ENCODE measurements at regions of chr1 and their contacts with region 1.

Region 1: GRCh38 chr1:156838981-156839410 is 19.9 kb downstream of the INSRR start:
- DNase-seq: peak in 1 of 2 experiments; percentile 86
- H3K4me3 ChIP-seq: no peak overlapping the region
- H3K27ac ChIP-seq: no peak overlapping the region
- H3K4me1 ChIP-seq: peaks cover 0 to 2% (median 2%) of the 10 kb centered on the region in 4 experiments; a peak in 3 of 7 replicates
- H3K27me3 ChIP-seq: peaks cover 9 to 23% (median 22%) of the 10 kb centered on the region in 4 experiments
- CTCF ChIP-seq: peak; percentile 92 to 94 (median 93)
- EP300 ChIP-seq: no peak
- POLR2A ChIP-seq: no peak
- RAD21 ChIP-seq: peak; percentile 90 to 94

Region 2: GRCh38 chr1:156767101-156767878 is 71.7 kb before region 1 on chr1 and contains the start of gene PRCC:
- CTCF ChIA-PET with region 1: interaction called, 10 read pairs
- POLR2A ChIA-PET with region 1: interaction called, 3 read pairs
- DNase-seq: peak; percentile 94 to 98
- H3K4me3 ChIP-seq: peak within 1 kb of the TSS; percentile 67 to 97 (median 86)
- H3K27ac ChIP-seq: peak within 1 kb of the TSS; percentile 86
- H3K4me1 ChIP-seq: peaks cover 0 to 16% (median 6%) of the 10 kb centered on the region in 4 experiments; a peak in 5 of 7 replicates
- H3K27me3 ChIP-seq: no peaks in the 10 kb centered on the region
- CTCF ChIP-seq: 0 out of 4 replicates have a peak, but pooled peaks of 1 of the 3 experiments have one; percentile 1
- EP300 ChIP-seq: no peak
- POLR2A ChIP-seq: peak in 1 of 2 experiments; percentile 74; a peak in 2 of 3 replicates
- RAD21 ChIP-seq: no peak
- total RNA-seq, gene PRCC: 102 and 115 TPM in 2 replicates

Region 3: GRCh38 chr1:156797212-156797871 is 41.7 kb before region 1 on chr1:
- CTCF ChIA-PET with region 1: interaction called, 491 read pairs
- POLR2A ChIA-PET with region 1: no interaction called
- DNase-seq: no peak
- H3K4me3 ChIP-seq: no peak overlapping the region
- H3K27ac ChIP-seq: no peak overlapping the region
- H3K4me1 ChIP-seq: no peaks in the 10 kb centered on the region
- H3K27me3 ChIP-seq: no peaks in the 10 kb centered on the region
- CTCF ChIP-seq: peak in 2 of 3 experiments; percentile 84 to 85; a peak in 3 of 4 replicates
- EP300 ChIP-seq: no peak
- POLR2A ChIP-seq: no peak
- RAD21 ChIP-seq: peak; percentile 81 to 83

Region 4: DNA sequence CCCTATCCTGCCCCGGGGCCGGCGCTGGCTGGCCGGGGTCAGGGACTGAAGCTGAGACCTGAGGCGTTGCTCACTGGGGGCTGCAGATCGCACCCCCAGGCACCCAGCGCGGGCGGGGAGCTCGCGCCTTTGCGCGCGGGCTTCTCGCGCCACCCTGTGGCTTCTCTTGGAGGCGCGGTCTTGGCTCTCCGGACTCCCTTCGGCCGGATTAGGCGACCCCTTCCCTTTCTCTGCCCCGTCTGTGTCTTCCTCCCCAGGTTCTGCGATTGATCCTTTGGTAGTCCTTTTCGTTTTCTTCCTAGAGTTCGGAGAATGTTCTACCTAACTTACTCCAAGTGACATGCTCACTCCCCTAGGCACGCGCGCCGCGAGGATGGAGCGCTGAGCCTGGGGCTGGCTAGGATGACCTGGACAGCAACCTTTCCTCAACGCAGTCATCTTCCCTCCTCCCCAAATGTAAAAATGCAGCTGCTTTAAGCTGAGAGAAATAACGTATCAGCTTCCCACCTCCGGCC is 21.2 kb after region 1 on chr1:
- CTCF ChIA-PET with region 1: interaction called, 556 read pairs
- POLR2A ChIA-PET with region 1: interaction called, 5 read pairs
- DNase-seq: peak in 1 of 2 experiments; percentile 85
- H3K4me3 ChIP-seq: peak overlapping the region; percentile 31 to 62 (median 58)
- H3K27ac ChIP-seq: no peak overlapping the region
- H3K4me1 ChIP-seq: peaks cover 0 to 15% (median 9%) of the 10 kb centered on the region in 4 experiments; a peak in 6 of 7 replicates
- H3K27me3 ChIP-seq: peaks cover 55 to 87% (median 82%) of the 10 kb centered on the region in 4 experiments
- CTCF ChIP-seq: peak; percentile 67 to 80 (median 74)
- EP300 ChIP-seq: no peak
- POLR2A ChIP-seq: no peak
- RAD21 ChIP-seq: peak; percentile 76 to 83

Region 5: DNA sequence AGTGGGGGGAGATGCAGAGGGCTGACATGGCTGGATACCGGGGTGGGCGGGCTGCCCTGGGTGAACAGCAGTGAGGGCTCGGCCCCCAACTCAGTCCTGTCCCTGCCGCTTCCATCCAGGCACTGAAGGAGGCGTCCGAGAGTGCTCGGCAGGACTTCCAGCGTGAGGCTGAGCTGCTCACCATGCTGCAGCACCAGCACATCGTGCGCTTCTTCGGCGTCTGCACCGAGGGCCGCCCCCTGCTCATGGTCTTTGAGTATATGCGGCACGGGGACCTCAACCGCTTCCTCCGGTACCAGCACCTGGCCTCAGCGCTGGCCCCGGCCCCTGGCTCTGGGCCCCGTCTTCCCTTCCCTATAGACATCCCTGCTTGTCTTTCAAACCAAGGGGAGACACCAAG is 37.3 kb after region 1 on chr1:
- CTCF ChIA-PET with region 1: interaction called, 719 read pairs
- POLR2A ChIA-PET with region 1: no interaction called
- DNase-seq: peak; percentile 46 to 78
- H3K4me3 ChIP-seq: no peak overlapping the region
- H3K27ac ChIP-seq: no peak overlapping the region
- H3K4me1 ChIP-seq: peaks cover 0 to 4% (median 1%) of the 10 kb centered on the region in 4 experiments; a peak in 4 of 7 replicates
- H3K27me3 ChIP-seq: peaks cover 0 to 41% (median 17%) of the 10 kb centered on the region in 4 experiments; a peak in 6 of 7 replicates
- CTCF ChIP-seq: peak; percentile 56 to 76 (median 75)
- EP300 ChIP-seq: no peak
- POLR2A ChIP-seq: no peak
- RAD21 ChIP-seq: peak; percentile 21 to 39; a peak in 2 of 4 replicates

Region 6: DNA sequence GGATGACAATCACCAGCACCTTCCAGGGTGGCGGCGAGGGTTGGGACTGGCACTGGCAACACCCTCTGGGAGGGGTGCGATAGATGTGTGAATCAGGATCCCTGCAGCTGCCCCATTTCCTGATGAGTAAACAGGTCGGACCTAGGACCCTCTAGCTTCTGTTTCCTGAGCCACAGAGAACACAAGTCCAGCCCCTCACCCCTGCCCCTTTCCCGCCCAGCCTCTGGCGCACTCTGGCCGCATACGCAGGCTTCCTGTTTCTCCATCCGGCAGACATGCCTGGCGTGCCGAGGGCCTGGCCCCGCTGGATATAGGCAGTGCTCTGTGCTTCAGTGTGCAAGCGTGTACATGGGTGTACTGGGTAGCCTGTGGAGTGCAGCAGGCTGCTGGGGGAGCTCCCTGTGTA is 59.2 kb after region 1 on chr1:
- CTCF ChIA-PET with region 1: interaction called, 719 read pairs
- POLR2A ChIA-PET with region 1: no interaction called
- DNase-seq: no peak
- H3K4me3 ChIP-seq: no peak overlapping the region
- H3K27ac ChIP-seq: no peak overlapping the region
- H3K4me1 ChIP-seq: peaks cover 0 to 9% (median 2%) of the 10 kb centered on the region in 4 experiments; a peak in 5 of 7 replicates
- H3K27me3 ChIP-seq: peaks cover 2 to 24% (median 21%) of the 10 kb centered on the region in 4 experiments
- CTCF ChIP-seq: no peak
- EP300 ChIP-seq: no peak
- POLR2A ChIP-seq: no peak
- RAD21 ChIP-seq: no peak

Region 7: DNA sequence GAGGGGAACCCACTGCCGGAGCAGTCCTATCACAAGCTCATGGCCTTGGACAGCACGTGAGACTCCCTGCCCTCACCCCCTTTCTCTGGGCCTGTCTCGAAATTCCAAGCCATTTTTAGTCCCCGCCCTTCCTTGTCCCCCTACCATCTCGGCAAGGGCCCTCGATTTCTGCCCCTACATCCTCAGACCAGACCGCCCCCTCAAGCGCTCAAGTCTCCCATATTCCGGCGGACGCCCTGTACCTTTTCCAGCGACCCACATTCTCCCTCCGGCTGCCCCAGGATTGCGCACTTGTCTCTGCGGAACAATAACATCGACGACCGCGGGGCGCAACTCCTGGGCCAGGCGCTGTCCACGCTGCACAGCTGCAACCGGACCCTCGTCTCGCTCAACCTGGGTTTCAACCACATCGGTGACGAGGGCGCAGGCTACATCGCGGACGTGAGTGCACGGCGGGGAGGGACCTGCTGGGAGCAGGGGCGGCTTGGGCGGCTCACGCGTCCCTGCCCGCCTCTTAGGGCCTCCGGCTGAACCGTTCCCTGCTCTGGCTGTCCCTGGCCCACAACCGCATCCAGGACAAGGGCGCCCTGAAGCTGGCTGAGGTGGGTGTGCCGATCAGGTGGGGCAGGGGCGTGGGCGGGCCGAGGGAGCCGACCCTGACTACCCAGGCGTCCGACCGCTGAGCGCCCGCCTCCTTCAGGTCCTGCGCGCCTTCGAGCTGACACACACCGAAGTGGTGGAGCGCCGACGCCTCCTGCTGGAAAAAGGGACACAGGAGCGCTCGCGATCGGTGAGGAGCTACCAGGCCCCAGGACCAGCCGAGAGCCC is 88.4 kb after region 1 on chr1:
- CTCF ChIA-PET with region 1: interaction called, 78 read pairs
- POLR2A ChIA-PET with region 1: no interaction called
- DNase-seq: peak in 1 of 2 experiments; percentile 90
- H3K4me3 ChIP-seq: peak overlapping the region; percentile 36 to 70 (median 62)
- H3K27ac ChIP-seq: no peak overlapping the region
- H3K4me1 ChIP-seq: peaks cover 3 to 21% (median 9%) of the 10 kb centered on the region in 4 experiments; a peak in 6 of 7 replicates
- H3K27me3 ChIP-seq: peaks cover 51 to 71% (median 69%) of the 10 kb centered on the region in 4 experiments
- CTCF ChIP-seq: peak; percentile 90 to 92 (median 92)
- EP300 ChIP-seq: no peak
- POLR2A ChIP-seq: no peak
- RAD21 ChIP-seq: peak; percentile 88 to 93

Region 8: GRCh38 chr1:157090196-157090647 is 251.2 kb after region 1 on chr1:
- CTCF ChIA-PET with region 1: no interaction called
- POLR2A ChIA-PET with region 1: no interaction called
- DNase-seq: peak; percentile 75 to 99
- H3K4me3 ChIP-seq: no peak overlapping the region
- H3K27ac ChIP-seq: no peak overlapping the region
- H3K4me1 ChIP-seq: peaks cover 3 to 5% (median 3%) of the 10 kb centered on the region in 4 experiments; a peak in 5 of 7 replicates
- H3K27me3 ChIP-seq: no peaks in the 10 kb centered on the region; a peak in 2 of 7 replicates
- CTCF ChIP-seq: peak; percentile 92 to 98 (median 97)
- EP300 ChIP-seq: peak in 1 of 2 experiments; percentile 23; a peak in 1 of 3 replicates
- POLR2A ChIP-seq: no peak
- RAD21 ChIP-seq: peak; percentile 99 to 100

Measured in H1 (cell line).